Endothelial cell of umbilical vein (primary cell): ENCODE measurements at regions of chr13 and their contacts with region 1.

Region 1: DNA sequence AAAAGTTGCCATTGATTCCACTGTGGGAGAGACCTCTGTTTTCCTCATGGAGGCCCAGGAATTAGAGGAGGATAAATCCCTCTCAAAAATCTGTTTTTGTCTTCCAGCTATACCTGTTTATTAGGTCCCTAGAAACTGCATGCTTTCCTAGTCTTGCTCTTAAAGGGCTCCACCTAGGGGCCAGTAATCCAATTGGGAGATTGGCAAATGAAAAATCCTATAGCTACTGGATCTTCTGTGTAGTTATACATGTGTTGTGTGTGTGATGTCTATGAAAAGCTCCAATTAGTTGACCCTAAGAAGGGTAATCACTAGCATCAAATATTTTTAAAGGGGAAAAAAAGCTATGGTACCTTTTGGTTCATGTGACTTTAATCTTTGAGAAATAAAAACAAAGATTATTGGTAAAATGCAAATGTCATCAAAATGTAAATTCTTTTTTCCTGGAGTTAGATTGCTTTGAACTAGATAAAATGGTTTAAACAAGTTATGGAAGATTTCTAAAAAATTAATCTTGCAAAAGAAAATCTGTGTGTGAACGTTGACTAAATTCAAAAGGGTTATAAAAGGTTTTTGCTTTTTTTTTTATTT is 63.4 kb upstream of the C1QTNF9B start:
- DNase-seq: peak; percentile 52
- H3K4me3 ChIP-seq: no peak overlapping the region
- H3K27ac ChIP-seq: no peak overlapping the region
- H3K4me1 ChIP-seq: no peaks in the 10 kb centered on the region
- H3K27me3 ChIP-seq: peaks cover 0 to 2% of the 10 kb centered on the region in 2 experiments
- CTCF ChIP-seq: peak; percentile 51 to 67
- POLR2A ChIP-seq: no peak

Region 2: GRCh38 chr13:23776698-23777574 is 183.7 kb before region 1 on chr13:
- CTCF ChIA-PET with region 1: no interaction called
- POLR2A ChIA-PET with region 1: no interaction called
- dilution Hi-C with region 1: no loop called
- intact Hi-C with region 1: no loop called
- DNase-seq: no peak
- H3K4me3 ChIP-seq: no peak overlapping the region
- H3K27ac ChIP-seq: no peak overlapping the region
- H3K4me1 ChIP-seq: no peaks in the 10 kb centered on the region
- H3K27me3 ChIP-seq: no peaks in the 10 kb centered on the region
- CTCF ChIP-seq: no peak
- POLR2A ChIP-seq: no peak

Region 3: GRCh38 chr13:23883255-23883654 is 77.4 kb before region 1 on chr13:
- CTCF ChIA-PET with region 1: no interaction called
- POLR2A ChIA-PET with region 1: no interaction called
- dilution Hi-C with region 1: no loop called
- intact Hi-C with region 1: no loop called
- DNase-seq: no peak
- H3K4me3 ChIP-seq: no peak overlapping the region
- H3K27ac ChIP-seq: no peak overlapping the region
- H3K4me1 ChIP-seq: peaks cover 5% of the 10 kb centered on the region
- H3K27me3 ChIP-seq: no peaks in the 10 kb centered on the region
- CTCF ChIP-seq: no peak
- POLR2A ChIP-seq: no peak

Region 4: DNA sequence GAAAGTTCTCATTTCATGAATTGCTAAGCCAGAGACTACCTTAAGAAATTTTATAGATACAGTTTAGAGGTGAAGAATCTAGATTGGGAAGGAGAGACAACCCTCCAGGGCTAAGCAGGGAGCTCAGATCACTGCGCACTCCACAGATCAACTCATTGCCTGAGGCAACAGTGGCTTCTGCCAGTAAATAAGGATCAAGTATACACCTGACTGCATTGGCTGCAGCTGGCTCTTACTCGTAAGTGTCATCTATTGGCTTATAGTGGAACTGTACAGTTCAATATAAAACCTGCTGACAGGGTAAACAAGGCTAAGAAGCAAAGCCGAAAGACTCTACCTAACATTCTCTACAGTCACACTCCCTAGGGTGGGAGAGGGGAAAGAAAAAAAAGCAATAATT is 45.4 kb before region 1 on chr13:
- CTCF ChIA-PET with region 1: interaction called, 72 read pairs
- POLR2A ChIA-PET with region 1: no interaction called
- dilution Hi-C with region 1: no loop called
- intact Hi-C with region 1: no loop called
- DNase-seq: no peak
- H3K4me3 ChIP-seq: no peak overlapping the region
- H3K27ac ChIP-seq: no peak overlapping the region
- H3K4me1 ChIP-seq: no peaks in the 10 kb centered on the region
- H3K27me3 ChIP-seq: peaks cover 10 to 12% of the 10 kb centered on the region in 2 experiments
- CTCF ChIP-seq: no peak
- POLR2A ChIP-seq: no peak

Region 5: GRCh38 chr13:23928985-23929384 is 31.7 kb before region 1 on chr13:
- CTCF ChIA-PET with region 1: interaction called, 14 read pairs
- POLR2A ChIA-PET with region 1: interaction called, 3 read pairs
- dilution Hi-C with region 1: no loop called
- intact Hi-C with region 1: no loop called
- DNase-seq: peak; percentile 63
- H3K4me3 ChIP-seq: no peak overlapping the region
- H3K27ac ChIP-seq: peak overlapping the region; percentile 59
- H3K4me1 ChIP-seq: peaks cover 20% of the 10 kb centered on the region
- H3K27me3 ChIP-seq: no peaks in the 10 kb centered on the region
- CTCF ChIP-seq: no peak
- POLR2A ChIP-seq: no peak

Region 6: GRCh38 chr13:23945612-23946011 is 15.0 kb before region 1 on chr13:
- CTCF ChIA-PET with region 1: interaction called, 50 read pairs
- POLR2A ChIA-PET with region 1: no interaction called
- dilution Hi-C with region 1: no loop called
- intact Hi-C with region 1: loop called (anchors 2 kb)
- DNase-seq: no peak
- H3K4me3 ChIP-seq: no peak overlapping the region
- H3K27ac ChIP-seq: no peak overlapping the region
- H3K4me1 ChIP-seq: no peaks in the 10 kb centered on the region
- H3K27me3 ChIP-seq: peaks cover 2 to 9% of the 10 kb centered on the region in 2 experiments
- CTCF ChIP-seq: no peak
- POLR2A ChIP-seq: no peak

Region 7: GRCh38 chr13:23980160-23980551 is 19.5 kb after region 1 on chr13:
- CTCF ChIA-PET with region 1: interaction called, 13 read pairs
- POLR2A ChIA-PET with region 1: no interaction called
- dilution Hi-C with region 1: no loop called
- intact Hi-C with region 1: no loop called
- DNase-seq: peak; percentile 59
- H3K4me3 ChIP-seq: peak overlapping the region; percentile 41 to 82 (median 57)
- H3K27ac ChIP-seq: peak overlapping the region; percentile 22
- H3K4me1 ChIP-seq: peaks cover 10% of the 10 kb centered on the region
- H3K27me3 ChIP-seq: peaks cover 2 to 4% of the 10 kb centered on the region in 2 experiments
- CTCF ChIP-seq: no peak
- POLR2A ChIP-seq: no peak

Region 8: DNA sequence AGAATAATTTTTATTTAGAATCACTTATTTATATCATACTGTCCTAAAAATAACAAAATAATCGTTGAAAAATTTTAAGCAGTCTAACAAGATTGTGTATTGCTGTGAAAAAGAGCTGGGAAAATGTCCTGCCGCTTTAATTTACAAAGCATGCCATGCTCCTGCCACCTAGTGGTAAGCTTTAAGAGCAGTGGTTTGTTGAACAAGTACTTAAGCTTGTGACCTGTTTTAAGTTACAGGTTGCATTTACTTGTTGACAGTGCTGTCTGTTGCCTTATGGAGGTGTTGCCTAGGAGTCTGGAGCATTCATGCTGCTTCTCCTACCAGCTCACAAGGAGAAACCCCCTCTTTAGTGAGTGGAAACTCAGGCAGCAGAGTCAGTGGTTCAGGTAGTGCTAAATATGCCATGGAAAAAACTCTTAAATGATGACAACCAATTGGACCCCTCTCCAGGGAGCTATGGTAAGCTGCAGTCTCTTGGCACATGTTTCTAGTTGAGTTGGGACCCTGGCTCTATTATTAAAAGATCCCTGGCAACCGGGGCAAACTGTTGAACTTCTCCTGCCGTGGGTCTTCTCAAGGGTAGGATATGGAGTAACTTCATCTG is 268.3 kb after region 1 on chr13:
- CTCF ChIA-PET with region 1: interaction called, 12 read pairs
- POLR2A ChIA-PET with region 1: no interaction called
- dilution Hi-C with region 1: no loop called
- intact Hi-C with region 1: no loop called
- DNase-seq: peak; percentile 67
- H3K4me3 ChIP-seq: no peak overlapping the region
- H3K27ac ChIP-seq: no peak overlapping the region
- H3K4me1 ChIP-seq: peaks cover 5% of the 10 kb centered on the region
- H3K27me3 ChIP-seq: no peaks in the 10 kb centered on the region
- CTCF ChIP-seq: peak; percentile 78 to 82
- POLR2A ChIP-seq: no peak